Endothelial cell of umbilical vein (primary cell): ENCODE measurements at regions of chr19 and their contacts with region 1.

Region 1: GRCh38 chr19:5987077-5987818 is 9.3 kb upstream of the RANBP3 start:
- DNase-seq: peak; percentile 86
- H3K4me3 ChIP-seq: no peak overlapping the region
- H3K27ac ChIP-seq: no peak overlapping the region
- H3K4me1 ChIP-seq: peaks cover 17% of the 10 kb centered on the region
- H3K27me3 ChIP-seq: no peaks in the 10 kb centered on the region
- CTCF ChIP-seq: peak; percentile 86 to 94
- POLR2A ChIP-seq: no peak

Region 2: DNA sequence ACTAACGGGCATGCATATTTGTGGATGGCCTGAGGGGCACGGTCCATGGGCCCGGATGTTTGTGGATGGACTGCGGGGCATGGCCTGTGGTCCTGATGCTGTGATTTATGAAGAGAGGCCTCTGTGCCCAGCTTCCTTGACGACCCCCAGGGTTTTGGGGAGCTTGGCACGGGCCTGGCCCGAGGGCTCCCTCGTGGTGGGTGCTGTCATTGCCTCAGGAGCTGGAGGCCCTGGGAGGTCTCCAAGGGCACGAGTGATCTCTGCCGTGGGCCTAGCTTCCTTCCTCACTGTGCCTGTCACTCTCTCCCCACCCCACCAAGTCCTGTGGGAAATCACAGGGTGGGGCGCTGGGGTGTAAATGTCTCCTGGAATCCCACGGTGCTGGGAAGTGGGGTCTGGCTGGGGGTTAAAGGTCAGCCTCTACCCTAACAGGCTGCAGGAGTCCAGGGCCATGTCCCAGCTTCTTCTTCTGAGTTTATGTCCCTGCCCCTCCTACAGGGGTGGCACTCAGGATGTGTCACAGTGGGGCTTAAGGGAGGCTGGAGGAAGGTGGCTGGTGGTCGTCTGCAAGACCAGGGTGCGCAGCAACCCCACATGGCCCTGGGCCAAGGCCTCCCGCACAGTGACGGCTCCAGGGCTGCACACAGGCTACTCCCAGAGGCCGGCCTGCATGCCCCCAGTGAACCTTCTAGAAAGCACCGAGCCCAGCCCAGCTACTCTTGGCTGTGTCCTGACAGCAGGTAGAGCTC is 18.2 kb after region 1 on chr19:
- CTCF ChIA-PET with region 1: interaction called, 24 read pairs
- POLR2A ChIA-PET with region 1: no interaction called
- dilution Hi-C with region 1: no loop called
- intact Hi-C with region 1: no loop called
- DNase-seq: no peak
- H3K4me3 ChIP-seq: no peak overlapping the region
- H3K27ac ChIP-seq: no peak overlapping the region
- H3K4me1 ChIP-seq: no peaks in the 10 kb centered on the region
- H3K27me3 ChIP-seq: no peaks in the 10 kb centered on the region
- CTCF ChIP-seq: no peak
- POLR2A ChIP-seq: no peak

Region 3: GRCh38 chr19:6014551-6015135 is 27.4 kb after region 1 on chr19:
- CTCF ChIA-PET with region 1: interaction called, 33 read pairs
- POLR2A ChIA-PET with region 1: no interaction called
- dilution Hi-C with region 1: no loop called
- intact Hi-C with region 1: no loop called
- DNase-seq: no peak
- H3K4me3 ChIP-seq: no peak overlapping the region
- H3K27ac ChIP-seq: peak overlapping the region; percentile 64
- H3K4me1 ChIP-seq: peaks cover 14% of the 10 kb centered on the region
- H3K27me3 ChIP-seq: no peaks in the 10 kb centered on the region
- CTCF ChIP-seq: no peak
- POLR2A ChIP-seq: no peak